Activated CD4-positive, alpha-beta memory T cell treated with anti-CD3 and anti-CD28 coated beads, Interleukin-2, amount 10 ng/mL, durations not matched to agents 7 days and 5 days (primary cell): ENCODE measurements at regions of chr11 and their contacts with region 1.

Region 1: GRCh38 chr11:110447897-110448745 is 18.4 kb downstream of the FDX1 start:
- DNase-seq: no peak
- H3K4me3 Mint-ChIP-seq: no peak overlapping the region
- H3K27ac Mint-ChIP-seq: no peak overlapping the region
- H3K4me1 Mint-ChIP-seq: peaks cover 24% of the 10 kb centered on the region
- H3K27me3 Mint-ChIP-seq: no peaks in the 10 kb centered on the region

Region 2: DNA sequence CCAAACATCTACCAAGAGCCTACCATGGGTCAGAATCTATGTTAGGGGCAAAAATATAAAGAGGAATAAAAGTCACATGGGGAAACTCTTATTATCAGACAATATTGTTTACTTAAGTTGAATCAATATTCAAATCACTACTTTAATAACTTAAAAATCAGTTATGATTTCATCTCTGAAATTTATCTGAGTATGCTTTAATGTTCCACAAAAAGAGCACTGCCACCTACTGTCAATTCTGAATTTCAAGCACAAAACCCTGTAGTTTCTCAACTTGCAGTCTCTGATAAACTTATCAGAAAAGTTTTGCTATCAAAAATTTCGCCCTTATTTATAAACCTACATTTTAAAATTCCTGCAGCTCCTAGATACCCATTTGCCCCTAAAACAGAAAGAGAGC is 199.1 kb before region 1 on chr11:
- CTCF ChIA-PET with region 1: no interaction called
- POLR2A ChIA-PET with region 1: no interaction called
- DNase-seq: no peak
- H3K4me3 Mint-ChIP-seq: no peak overlapping the region
- H3K27ac Mint-ChIP-seq: no peak overlapping the region
- H3K4me1 Mint-ChIP-seq: peaks cover 4% of the 10 kb centered on the region
- H3K27me3 Mint-ChIP-seq: no peaks in the 10 kb centered on the region

Region 3: DNA sequence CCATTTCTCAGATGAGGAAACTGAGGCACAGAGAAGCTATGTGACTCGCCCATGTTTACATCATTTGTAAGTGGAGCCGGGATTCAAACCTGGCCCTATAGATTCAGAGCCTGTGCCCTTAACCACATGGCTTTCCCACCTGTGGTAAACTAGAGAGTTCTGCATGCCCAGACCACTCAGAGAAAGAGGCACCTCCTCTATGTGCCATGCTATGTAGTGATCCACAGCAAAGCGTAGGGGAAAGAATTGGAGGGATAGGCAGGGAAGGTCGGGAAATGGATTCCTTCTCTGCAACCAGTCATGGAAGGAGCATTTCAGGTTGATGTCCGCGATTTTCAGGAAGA is 782.0 kb after region 1 on chr11:
- CTCF ChIA-PET with region 1: interaction called, 13 read pairs
- POLR2A ChIA-PET with region 1: no interaction called
- DNase-seq: no peak
- H3K4me3 Mint-ChIP-seq: peak overlapping the region; percentile 75
- H3K27ac Mint-ChIP-seq: no peak overlapping the region
- H3K4me1 Mint-ChIP-seq: peaks cover 30% of the 10 kb centered on the region
- H3K27me3 Mint-ChIP-seq: peaks cover 31% of the 10 kb centered on the region